ENCODE measurements at regions of chr15 and their contacts with region 1.

Region 1: DNA sequence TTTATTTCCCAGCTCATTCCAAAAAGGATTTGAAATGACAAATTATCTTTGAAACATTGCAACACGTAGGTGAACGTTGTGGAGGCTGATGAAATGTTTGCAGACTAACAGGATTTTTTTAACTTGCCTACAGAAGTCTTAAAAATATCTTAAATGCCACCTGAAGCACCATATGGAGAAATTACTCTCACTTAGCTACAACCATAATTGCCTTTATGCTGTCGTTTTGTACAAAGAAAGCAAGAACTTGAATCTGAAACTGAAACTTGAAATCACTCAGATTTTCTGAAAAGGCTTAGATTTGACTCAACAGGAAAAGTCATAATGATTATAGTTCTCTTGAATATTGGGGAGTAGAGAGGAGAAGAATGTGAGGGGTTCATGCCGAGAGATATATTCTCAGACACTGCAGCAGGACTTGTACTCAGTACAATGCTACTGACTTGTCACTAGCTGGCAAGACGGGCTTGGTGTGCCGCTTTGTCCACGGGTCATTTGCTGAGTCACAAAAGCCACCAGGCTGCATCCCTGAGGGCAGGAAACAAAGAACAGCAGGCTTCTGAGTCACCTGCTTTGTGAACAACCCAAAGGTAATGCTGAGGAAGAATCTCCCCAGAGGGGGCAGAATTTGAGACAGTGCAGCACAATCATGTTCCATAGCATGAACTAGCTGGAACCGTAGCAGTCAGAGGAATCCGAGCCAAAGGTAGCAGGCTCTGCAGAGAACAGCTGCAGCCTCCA is 7.1 kb upstream of the FMN1 start:
- DNase-seq: peak; percentile 79
- ATAC-seq: peak; percentile 97
- H3K4me3 Mint-ChIP-seq: peak overlapping the region; percentile 49
- H3K27ac Mint-ChIP-seq: peak overlapping the region; percentile 60
- H3K4me1 Mint-ChIP-seq: peaks cover 28% of the 10 kb centered on the region
- H3K27me3 Mint-ChIP-seq: peaks cover 7% of the 10 kb centered on the region

Region 2: DNA sequence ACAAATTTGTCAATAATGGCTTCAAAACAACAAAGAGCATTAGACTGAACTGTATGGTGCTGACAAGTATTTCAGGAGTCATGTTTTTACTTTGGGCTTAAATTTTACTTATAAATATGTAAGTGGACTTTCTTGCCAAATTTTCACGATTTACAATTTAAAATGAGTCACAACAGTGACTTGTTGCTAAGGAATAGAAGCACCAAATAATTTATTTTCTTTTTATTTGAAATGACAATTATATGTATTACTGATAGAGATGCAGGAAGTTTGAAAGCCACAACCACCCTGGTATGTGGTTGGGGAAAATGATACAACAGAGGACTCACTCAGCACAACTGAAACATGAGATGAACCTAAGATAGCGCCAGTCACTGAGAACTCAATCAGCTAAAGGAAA is 97.4 kb before region 1 on chr15:
- CTCF ChIA-PET with region 1: no interaction called
- POLR2A ChIA-PET with region 1: no interaction called
- intact Hi-C with region 1: loop called in 1 of 2 experiments (anchors 5 kb)
- DNase-seq: peak; percentile 56
- ATAC-seq: peak; percentile 98
- H3K4me3 Mint-ChIP-seq: no peak overlapping the region
- H3K27ac Mint-ChIP-seq: peak overlapping the region; percentile 49
- H3K4me1 Mint-ChIP-seq: peaks cover 20% of the 10 kb centered on the region
- H3K27me3 Mint-ChIP-seq: no peaks in the 10 kb centered on the region

Region 3: DNA sequence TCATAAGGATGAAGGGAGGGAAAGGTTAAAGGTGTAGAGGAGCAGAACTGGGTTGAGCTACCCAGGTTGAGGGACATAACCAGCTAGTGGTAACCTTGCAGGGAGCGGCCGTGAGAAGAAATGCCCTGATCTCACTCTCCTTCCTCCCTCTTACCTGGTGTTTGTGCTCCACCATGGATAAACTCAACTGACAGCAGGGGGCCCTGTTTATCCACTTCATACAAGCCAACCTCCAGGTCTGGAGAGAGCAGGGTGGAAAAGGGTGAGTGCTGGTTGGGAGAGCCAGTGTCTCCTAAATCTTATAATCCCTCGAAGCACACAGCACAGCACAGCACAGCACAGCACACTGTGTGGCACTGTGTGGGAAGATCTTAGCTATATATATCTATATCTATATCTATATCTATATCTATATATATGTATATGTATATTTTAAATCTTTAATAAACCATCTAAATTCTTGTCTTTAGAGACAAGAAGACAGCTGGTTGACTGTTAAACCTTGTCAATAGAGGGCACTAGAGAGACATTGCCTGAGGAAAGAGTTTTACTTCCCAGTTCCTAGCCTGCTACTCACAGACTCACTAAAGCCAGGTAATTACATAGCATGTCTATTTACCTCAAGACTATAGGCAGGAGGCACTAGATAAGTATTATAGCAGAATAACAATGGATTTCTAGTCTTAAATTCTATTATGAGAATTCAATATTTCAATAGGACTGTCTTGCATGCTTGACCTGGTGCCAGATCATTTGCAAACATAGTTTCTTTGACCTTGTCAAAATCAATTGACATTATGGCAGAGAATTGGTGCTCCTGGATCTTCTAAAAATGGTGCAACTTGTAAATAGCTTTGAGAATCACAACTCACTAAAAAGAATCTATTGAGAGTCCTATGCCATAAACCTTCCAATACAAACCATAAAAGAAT is 14.5 kb after region 1 on chr15:
- CTCF ChIA-PET with region 1: interaction called, 10 read pairs
- POLR2A ChIA-PET with region 1: interaction called, 3 read pairs
- intact Hi-C with region 1: no loop called
- DNase-seq: no peak
- ATAC-seq: peak; percentile 42
- H3K4me3 Mint-ChIP-seq: no peak overlapping the region
- H3K27ac Mint-ChIP-seq: no peak overlapping the region
- H3K4me1 Mint-ChIP-seq: no peaks in the 10 kb centered on the region
- H3K27me3 Mint-ChIP-seq: no peaks in the 10 kb centered on the region

Region 4: GRCh38 chr15:33226559-33227181 is 25.0 kb after region 1 on chr15:
- CTCF ChIA-PET with region 1: interaction called, 4 read pairs
- POLR2A ChIA-PET with region 1: no interaction called
- intact Hi-C with region 1: loop called (anchors 1 kb)
- DNase-seq: peak; percentile 78
- ATAC-seq: peak; percentile 97
- H3K4me3 Mint-ChIP-seq: no peak overlapping the region
- H3K27ac Mint-ChIP-seq: no peak overlapping the region
- H3K4me1 Mint-ChIP-seq: peaks cover 18% of the 10 kb centered on the region
- H3K27me3 Mint-ChIP-seq: no peaks in the 10 kb centered on the region

Region 5: DNA sequence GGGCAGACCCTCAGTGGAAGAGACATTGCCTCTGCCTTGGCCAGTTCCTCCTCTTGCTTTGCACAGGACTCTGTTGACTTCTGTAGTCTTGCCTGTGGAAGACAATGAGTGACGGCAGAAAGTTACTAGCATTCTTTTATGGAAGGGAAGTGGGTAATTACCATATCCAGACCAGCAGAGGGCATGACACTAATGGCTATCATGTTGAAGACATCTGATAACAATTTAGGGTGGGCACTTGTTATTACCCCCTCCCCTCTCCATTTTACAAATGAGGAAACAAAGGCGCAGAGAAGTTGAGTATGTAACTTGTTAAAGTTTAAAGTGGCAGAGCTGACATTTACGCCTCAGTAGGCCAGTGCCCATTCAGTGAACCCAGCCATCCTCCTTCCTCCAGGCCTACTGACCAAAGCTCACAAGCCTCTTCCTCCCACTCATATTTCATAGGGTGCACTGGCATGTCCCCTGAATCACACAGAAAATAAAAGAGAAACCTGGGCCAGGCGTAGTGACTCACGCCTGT is 41.1 kb after region 1 on chr15:
- CTCF ChIA-PET with region 1: interaction called, 4 read pairs
- POLR2A ChIA-PET with region 1: no interaction called
- intact Hi-C with region 1: loop called in 1 of 2 experiments (anchors 2 kb)
- DNase-seq: no peak
- ATAC-seq: no peak
- H3K4me3 Mint-ChIP-seq: no peak overlapping the region
- H3K27ac Mint-ChIP-seq: peak overlapping the region; percentile 38
- H3K4me1 Mint-ChIP-seq: peaks cover 16% of the 10 kb centered on the region
- H3K27me3 Mint-ChIP-seq: no peaks in the 10 kb centered on the region

Measured in activated CD4-positive, alpha-beta T cell treated with anti-CD3 and anti-CD28 coated beads for 36 hours (primary cell).